Sciatic nerve (tissue), 2 donors: ENCODE measurements at regions of chr2 and their contacts with region 1.

Region 1: GRCh38 chr2:27281855-27282559 is at the start of gene TRIM54:
- DNase-seq: no peak
- ATAC-seq: peak; percentile 17
- total RNA-seq, gene TRIM54: 0.31 TPM

Region 2: GRCh38 chr2:26235085-26235484 is 1046.9 kb before region 1 on chr2:
- intact Hi-C with region 1: no loop called
- DNase-seq: no peak
- ATAC-seq: no peak

Region 3: GRCh38 chr2:27095745-27096651 is 186.0 kb before region 1 on chr2:
- intact Hi-C with region 1: loop called (anchors 10 kb)
- DNase-seq: no peak
- ATAC-seq: peak; percentile 88